ENCODE measurements at regions of chr15 and their contacts with region 1.

Region 1: GRCh38 chr15:33021806-33022389 is 172.6 kb downstream of the FMN1 start:
- DNase-seq: no peak
- ATAC-seq: peak; percentile 71
- H3K4me3 ChIP-seq: no peak overlapping the region
- H3K27ac ChIP-seq: no peak overlapping the region
- H3K4me1 ChIP-seq: no peaks in the 10 kb centered on the region
- H3K27me3 ChIP-seq: no peaks in the 10 kb centered on the region

Region 2: GRCh38 chr15:32974691-32975090 is 47.2 kb before region 1 on chr15:
- intact Hi-C with region 1: no loop called
- DNase-seq: no peak
- ATAC-seq: no peak
- H3K4me3 ChIP-seq: no peak overlapping the region
- H3K27ac ChIP-seq: no peak overlapping the region
- H3K4me1 ChIP-seq: no peaks in the 10 kb centered on the region
- H3K27me3 ChIP-seq: no peaks in the 10 kb centered on the region

Region 3: DNA sequence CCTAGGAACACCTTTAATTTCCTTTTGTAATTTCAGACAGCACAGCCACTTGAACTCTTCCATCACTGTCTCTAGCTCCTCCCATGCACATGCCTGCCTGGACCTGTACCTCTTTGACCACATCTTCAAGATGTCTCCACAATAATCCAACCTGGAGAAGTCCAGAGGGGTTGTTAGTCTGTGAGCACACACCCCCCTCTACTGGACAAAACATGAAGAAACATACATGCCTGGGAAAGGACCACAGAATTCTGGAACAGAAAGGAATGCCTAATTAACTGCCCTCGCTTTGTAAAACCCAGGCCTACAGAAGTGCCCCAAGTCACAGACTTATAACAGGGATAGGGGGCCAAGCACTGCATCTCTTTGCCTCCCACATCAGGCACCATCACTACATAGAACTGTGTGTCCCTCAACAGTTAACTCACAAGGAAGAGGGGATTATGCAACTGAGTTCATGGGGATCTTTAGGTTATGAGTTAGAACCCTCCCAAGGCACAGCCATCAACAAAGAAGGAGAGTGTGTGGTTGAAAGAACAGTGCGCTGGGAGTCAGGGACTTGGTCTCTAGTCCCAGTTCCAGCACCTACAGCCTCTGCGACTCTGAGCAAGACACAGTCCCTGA is 110.9 kb after region 1 on chr15:
- intact Hi-C with region 1: loop called (anchors 2 to 10 kb)
- DNase-seq: no peak
- ATAC-seq: peak; percentile 58
- H3K4me3 ChIP-seq: no peak overlapping the region
- H3K27ac ChIP-seq: no peak overlapping the region
- H3K4me1 ChIP-seq: no peaks in the 10 kb centered on the region
- H3K27me3 ChIP-seq: no peaks in the 10 kb centered on the region

Region 4: GRCh38 chr15:33138000-33138399 is 116.1 kb after region 1 on chr15:
- intact Hi-C with region 1: loop called (anchors 2 to 10 kb)
- DNase-seq: no peak
- ATAC-seq: no peak
- H3K4me3 ChIP-seq: no peak overlapping the region
- H3K27ac ChIP-seq: no peak overlapping the region
- H3K4me1 ChIP-seq: no peaks in the 10 kb centered on the region
- H3K27me3 ChIP-seq: no peaks in the 10 kb centered on the region

Measured in aorta (tissue), 5 donors.